ENCODE measurements at regions of chr4 and their contacts with region 1.

Region 1: DNA sequence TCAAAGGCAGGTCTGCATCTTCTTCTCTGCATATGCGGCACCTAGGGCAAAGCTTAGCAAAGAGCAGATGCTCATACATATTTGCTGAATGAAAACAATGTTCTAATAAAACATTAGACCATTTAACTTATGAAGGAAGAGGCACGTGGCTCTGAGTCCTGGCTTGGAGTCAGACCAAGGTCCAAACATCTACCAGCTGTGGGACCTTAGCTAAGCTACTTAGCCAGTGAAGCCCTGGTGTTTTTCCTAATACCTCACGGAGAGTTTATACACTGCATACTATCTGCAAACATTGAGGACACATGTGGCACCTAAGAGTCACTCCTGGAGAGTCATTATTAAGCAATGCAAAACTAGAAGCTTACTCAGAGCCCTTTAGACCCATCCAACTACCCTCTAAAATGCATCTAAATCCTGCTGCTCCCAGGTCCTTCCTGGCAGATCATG is 9.0 kb downstream of the PDGFC start:
- DNase-seq: no peak
- H3K4me3 Mint-ChIP-seq: peak overlapping the region; percentile 59
- H3K27ac Mint-ChIP-seq: peak overlapping the region; percentile 91
- H3K4me1 Mint-ChIP-seq: peaks cover 38% of the 10 kb centered on the region
- H3K27me3 Mint-ChIP-seq: no peaks in the 10 kb centered on the region
- CTCF ChIP-seq: no peak

Region 2: GRCh38 chr4:156949373-156949814 is 13.2 kb before region 1 on chr4:
- CTCF ChIA-PET with region 1: interaction called, 4 read pairs
- intact Hi-C with region 1: loop called (anchors 2 kb)
- DNase-seq: no peak
- H3K4me3 Mint-ChIP-seq: peak overlapping the region; percentile 62
- H3K27ac Mint-ChIP-seq: peak overlapping the region; percentile 99
- H3K4me1 Mint-ChIP-seq: peaks cover 60% of the 10 kb centered on the region
- H3K27me3 Mint-ChIP-seq: no peaks in the 10 kb centered on the region
- CTCF ChIP-seq: no peak

Region 3: GRCh38 chr4:157075811-157076577 is 113.4 kb after region 1 on chr4 and contains the start of gene GLRB:
- CTCF ChIA-PET with region 1: no interaction called
- intact Hi-C with region 1: no loop called
- DNase-seq: peak; percentile 27
- H3K4me3 Mint-ChIP-seq: peak within 1 kb of the TSS; percentile 95
- H3K27ac Mint-ChIP-seq: peak within 1 kb of the TSS; percentile 71
- H3K4me1 Mint-ChIP-seq: peaks cover 22% of the 10 kb centered on the region
- H3K27me3 Mint-ChIP-seq: no peaks in the 10 kb centered on the region
- CTCF ChIP-seq: no peak
- total RNA-seq, gene GLRB: 7.6 and 9.1 TPM in 2 replicates

Measured in Calu3 (cell line).